ENCODE measurements at regions of chr12 and their contacts with region 1.

Region 1: GRCh38 chr12:110528277-110528839 is 26.2 kb downstream of the RAD9B start:
- DNase-seq: no peak

Region 2: DNA sequence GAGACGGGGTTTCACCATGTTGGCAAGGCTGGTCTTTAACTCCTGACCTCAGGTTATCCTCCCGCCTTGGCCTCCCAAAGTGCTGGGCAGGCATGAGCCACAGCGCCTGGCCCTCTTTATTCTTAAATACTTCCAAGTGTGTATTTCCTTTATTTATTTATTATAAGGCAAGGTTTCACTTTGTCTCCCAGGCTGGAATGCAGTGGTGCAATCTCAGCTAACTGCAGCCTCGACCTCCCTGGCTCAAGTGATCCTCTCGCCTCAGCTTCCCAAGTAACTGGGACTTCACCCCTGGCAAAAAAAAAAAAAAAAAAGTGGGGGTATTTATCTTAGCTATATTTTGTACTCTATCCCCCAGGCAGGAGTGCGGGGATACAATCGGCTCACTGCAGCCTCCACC is 52.9 kb before region 1 on chr12:
- intact Hi-C with region 1: no loop called
- DNase-seq: no peak

Region 3: GRCh38 chr12:110590806-110591326 is 62.5 kb after region 1 on chr12:
- intact Hi-C with region 1: loop called in 1 of 2 experiments (anchors 10 kb)
- DNase-seq: no peak